ENCODE measurements at regions of chr12 and their contacts with region 1.

Region 1: GRCh38 chr12:49088190-49088931 is 6.2 kb downstream of the DHH start:
- DNase-seq: peak; percentile 75
- ATAC-seq: peak; percentile 78
- H3K4me3 Mint-ChIP-seq: peak overlapping the region; percentile 50
- H3K27ac Mint-ChIP-seq: no peak overlapping the region
- H3K4me1 Mint-ChIP-seq: peaks cover 40% of the 10 kb centered on the region
- H3K27me3 Mint-ChIP-seq: peaks cover 92% of the 10 kb centered on the region
- CTCF ChIP-seq: peak; percentile 83

Region 2: GRCh38 chr12:48795480-48796455 is 292.6 kb before region 1 on chr12:
- CTCF ChIA-PET with region 1: no interaction called
- POLR2A ChIA-PET with region 1: no interaction called
- DNase-seq: peak; percentile 87
- ATAC-seq: peak; percentile 95
- H3K4me3 Mint-ChIP-seq: peak overlapping the region; percentile 29; the same call in 1 of the 2 replicates
- H3K27ac Mint-ChIP-seq: no peak overlapping the region
- H3K4me1 Mint-ChIP-seq: peaks cover 10% of the 10 kb centered on the region
- H3K27me3 Mint-ChIP-seq: peaks cover 5% of the 10 kb centered on the region; the same call in 1 of the 2 replicates
- CTCF ChIP-seq: peak; percentile 98

Region 3: DNA sequence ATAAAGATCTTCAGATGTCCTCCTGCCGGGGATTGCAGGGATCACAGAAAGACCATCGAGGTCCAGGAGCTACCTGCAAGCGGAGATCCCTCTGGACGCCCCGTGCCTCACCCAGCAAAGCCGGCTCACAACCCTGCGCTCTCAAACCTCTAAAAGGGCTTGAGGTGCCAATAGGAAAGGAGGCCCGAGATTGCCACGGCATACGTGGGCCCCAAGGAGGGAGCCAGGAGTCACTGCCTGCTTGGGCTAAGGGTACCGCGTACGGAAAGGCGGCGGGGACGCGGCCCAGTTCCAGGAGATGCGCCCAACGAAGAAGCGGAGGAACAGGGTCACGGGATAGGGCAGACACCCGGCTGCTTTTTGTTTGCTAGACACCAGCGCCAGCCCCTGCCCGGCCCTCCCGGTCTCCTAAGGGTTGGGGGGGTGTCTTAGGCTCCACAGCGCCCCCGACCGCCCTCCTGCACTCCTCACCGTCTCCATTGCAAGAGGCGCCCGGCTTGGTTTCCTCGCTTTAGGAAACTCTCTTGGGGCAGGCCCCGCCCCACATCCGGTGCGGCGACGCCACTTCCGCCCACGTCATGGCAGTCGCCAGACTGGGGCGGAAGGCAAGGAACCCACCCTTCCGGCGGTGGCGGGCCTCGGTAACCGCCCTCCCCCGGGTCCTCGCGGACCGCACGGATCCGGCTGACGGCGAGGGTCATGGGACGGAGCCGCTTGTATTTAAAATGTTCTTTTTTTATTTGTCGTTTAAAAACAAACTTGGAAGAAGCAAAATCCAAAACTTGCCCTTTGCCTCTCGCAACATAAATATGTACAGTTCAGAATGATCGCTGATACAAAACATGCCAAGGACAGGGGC is 69.9 kb before region 1 on chr12 and contains the start of gene PRKAG1:
- CTCF ChIA-PET with region 1: interaction called, 12 read pairs
- POLR2A ChIA-PET with region 1: no interaction called
- DNase-seq: peak; percentile 97
- ATAC-seq: peak; percentile 94
- H3K4me3 Mint-ChIP-seq: peak within 1 kb of the TSS; percentile 91
- H3K27ac Mint-ChIP-seq: peak within 1 kb of the TSS; percentile 99
- H3K4me1 Mint-ChIP-seq: peaks cover 16% of the 10 kb centered on the region
- H3K27me3 Mint-ChIP-seq: peaks cover 6% of the 10 kb centered on the region
- CTCF ChIP-seq: no peak
- total RNA-seq, gene PRKAG1: 37.9 to 41.6 TPM (median 38.0 TPM) in 3 replicates

Region 4: GRCh38 chr12:49060237-49061156 is 27.9 kb before region 1 on chr12 and contains the start of gene KMT2D:
- CTCF ChIA-PET with region 1: interaction called, 67 read pairs
- POLR2A ChIA-PET with region 1: no interaction called
- DNase-seq: peak; percentile 92
- ATAC-seq: peak; percentile 64
- H3K4me3 Mint-ChIP-seq: peak within 1 kb of the TSS; percentile 96
- H3K27ac Mint-ChIP-seq: peak within 1 kb of the TSS; percentile 92
- H3K4me1 Mint-ChIP-seq: peaks cover 47% of the 10 kb centered on the region
- H3K27me3 Mint-ChIP-seq: no peaks in the 10 kb centered on the region
- CTCF ChIP-seq: no peak
- total RNA-seq, gene KMT2D: 100 to 104 TPM (median 101 TPM) in 3 replicates

Region 5: GRCh38 chr12:49110464-49111155 is 22.2 kb after region 1 on chr12 and contains the start of gene LMBR1L:
- CTCF ChIA-PET with region 1: interaction called, 216 read pairs
- POLR2A ChIA-PET with region 1: no interaction called
- DNase-seq: peak; percentile 97
- ATAC-seq: peak; percentile 96
- H3K4me3 Mint-ChIP-seq: peak within 1 kb of the TSS; percentile 96
- H3K27ac Mint-ChIP-seq: peak within 1 kb of the TSS; percentile 98
- H3K4me1 Mint-ChIP-seq: peaks cover 29% of the 10 kb centered on the region
- H3K27me3 Mint-ChIP-seq: peaks cover 4% of the 10 kb centered on the region
- CTCF ChIP-seq: no peak
- total RNA-seq, gene LMBR1L: 52.8 to 78.2 TPM (median 53.1 TPM) in 3 replicates

Region 6: DNA sequence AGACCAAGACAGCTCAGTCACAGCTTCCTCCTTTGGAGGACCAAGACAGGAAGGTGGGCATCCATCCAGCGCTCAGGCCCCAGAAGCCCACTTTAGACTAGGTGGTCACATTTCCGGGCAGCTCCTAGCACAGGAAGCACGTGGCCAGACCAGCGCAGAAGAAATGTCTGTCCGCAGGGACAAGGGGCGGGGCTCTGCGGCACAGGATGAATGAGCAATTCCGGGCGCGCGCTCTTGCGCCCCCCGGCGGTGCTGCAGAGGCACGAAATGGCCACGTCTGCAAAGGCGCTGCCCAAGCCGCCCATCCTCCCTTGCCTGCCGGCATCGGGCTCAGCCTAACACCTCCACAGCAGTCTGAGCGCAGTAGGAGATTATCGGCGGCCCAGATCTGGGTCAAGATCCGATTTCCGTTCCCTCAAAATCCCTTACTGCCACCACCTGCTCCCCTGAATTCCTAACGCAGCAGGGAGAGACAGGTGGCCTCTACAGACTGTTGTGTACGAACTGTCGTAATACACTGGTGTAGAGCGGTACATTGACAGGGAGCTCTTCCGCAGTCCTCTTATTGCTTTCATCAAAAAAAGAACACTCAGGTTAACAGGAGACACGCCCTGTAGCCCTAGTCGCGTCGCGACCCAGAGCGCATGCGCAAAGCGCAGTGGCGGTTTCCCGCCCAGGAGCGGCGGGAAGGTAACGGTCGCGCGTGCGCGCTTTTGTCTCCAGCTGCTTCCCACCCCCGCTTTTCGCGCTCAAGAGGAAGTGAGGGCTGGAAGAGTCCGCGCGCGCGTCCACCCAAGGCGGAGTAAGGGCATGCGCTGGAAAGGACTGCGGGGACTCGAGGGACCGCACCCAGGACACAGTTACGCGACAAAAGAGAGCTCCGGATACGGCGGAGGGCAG is 42.0 kb after region 1 on chr12:
- CTCF ChIA-PET with region 1: interaction called, 24 read pairs
- POLR2A ChIA-PET with region 1: interaction called, 4 read pairs
- DNase-seq: peak; percentile 90
- ATAC-seq: peak; percentile 65
- H3K4me3 Mint-ChIP-seq: peak overlapping the region; percentile 90
- H3K27ac Mint-ChIP-seq: peak overlapping the region; percentile 99
- H3K4me1 Mint-ChIP-seq: peaks cover 19% of the 10 kb centered on the region
- H3K27me3 Mint-ChIP-seq: no peaks in the 10 kb centered on the region; the same call in 1 of the 2 replicates
- CTCF ChIP-seq: peak; percentile 64

Region 7: GRCh38 chr12:49623142-49623904 is 535.0 kb after region 1 on chr12 and contains the start of gene PRPF40B:
- CTCF ChIA-PET with region 1: no interaction called
- POLR2A ChIA-PET with region 1: no interaction called
- DNase-seq: peak; percentile 92
- ATAC-seq: peak; percentile 84
- H3K4me3 Mint-ChIP-seq: peak within 1 kb of the TSS; percentile 90
- H3K27ac Mint-ChIP-seq: peak within 1 kb of the TSS; percentile 92
- H3K4me1 Mint-ChIP-seq: peaks cover 35% of the 10 kb centered on the region
- H3K27me3 Mint-ChIP-seq: no peaks in the 10 kb centered on the region
- CTCF ChIP-seq: peak; percentile 47; the same call in 1 of the 2 replicates
- total RNA-seq, gene PRPF40B: 38.0 to 46.0 TPM (median 40.5 TPM) in 3 replicates

Measured in WTC11 (cell line).